ENCODE measurements at regions of chr3 and their contacts with region 1.

Region 1: GRCh38 chr3:50350527-50351322 is at the starts of genes CYB561D2 and NPRL2:
- DNase-seq: peak; percentile 97
- H3K4me3 ChIP-seq: peak within 1 kb of the TSS; percentile 76 to 94
- H3K27ac ChIP-seq: peak within 1 kb of the TSS; percentile 83 to 98
- H3K4me1 ChIP-seq: peaks cover 11 to 59% of the 10 kb centered on the region in 2 experiments; a peak in 2 of 4 replicates
- H3K27me3 ChIP-seq: no peaks in the 10 kb centered on the region
- CTCF ChIP-seq: no peak
- EP300 ChIP-seq: no peak
- RAD21 ChIP-seq: no peak
- polyA plus RNA-seq, gene CYB561D2: 40.7 and 46.5 TPM in 2 replicates
- polyA plus RNA-seq, gene NPRL2: 43.6 and 56.2 TPM in 2 replicates

Region 2: GRCh38 chr3:50370594-50370993 is 19.9 kb after region 1 on chr3:
- CTCF ChIA-PET with region 1: interaction called, 11 read pairs
- POLR2A ChIA-PET with region 1: interaction called, 8 read pairs
- DNase-seq: peak; percentile 78
- H3K4me3 ChIP-seq: no peak overlapping the region
- H3K27ac ChIP-seq: peak overlapping the region in 1 of 2 experiments; percentile 56; a peak in 2 of 4 replicates
- H3K4me1 ChIP-seq: peaks cover 0 to 78% of the 10 kb centered on the region in 2 experiments; a peak in 2 of 4 replicates
- H3K27me3 ChIP-seq: no peaks in the 10 kb centered on the region
- CTCF ChIP-seq: peak; percentile 31
- EP300 ChIP-seq: no peak
- RAD21 ChIP-seq: peak; percentile 72

Region 3: GRCh38 chr3:50388016-50388719 is 37.4 kb after region 1 on chr3:
- CTCF ChIA-PET with region 1: interaction called, 42 read pairs
- POLR2A ChIA-PET with region 1: interaction called, 11 read pairs
- DNase-seq: peak; percentile 89
- H3K4me3 ChIP-seq: no peak overlapping the region
- H3K27ac ChIP-seq: peak overlapping the region in 1 of 2 experiments; percentile 100; a peak in 2 of 4 replicates
- H3K4me1 ChIP-seq: peaks cover 0 to 99% of the 10 kb centered on the region in 2 experiments; a peak in 2 of 4 replicates
- H3K27me3 ChIP-seq: no peaks in the 10 kb centered on the region
- CTCF ChIP-seq: peak; percentile 46
- EP300 ChIP-seq: peak in 1 of 2 experiments; percentile 86; a peak in 1 of 4 replicates
- RAD21 ChIP-seq: peak; percentile 73

Region 4: GRCh38 chr3:50436114-50436674 is 85.5 kb after region 1 on chr3:
- CTCF ChIA-PET with region 1: interaction called, 19 read pairs
- POLR2A ChIA-PET with region 1: interaction called, 13 read pairs
- DNase-seq: peak; percentile 85
- H3K4me3 ChIP-seq: peak overlapping the region in 1 of 2 experiments; percentile 33; a peak in 1 of 4 replicates
- H3K27ac ChIP-seq: peak overlapping the region in 1 of 2 experiments; percentile 100; a peak in 2 of 4 replicates
- H3K4me1 ChIP-seq: peaks cover 0 to 97% of the 10 kb centered on the region in 2 experiments; a peak in 2 of 4 replicates
- H3K27me3 ChIP-seq: no peaks in the 10 kb centered on the region
- CTCF ChIP-seq: peak; percentile 84
- EP300 ChIP-seq: no peak
- RAD21 ChIP-seq: peak; percentile 85

Region 5: DNA sequence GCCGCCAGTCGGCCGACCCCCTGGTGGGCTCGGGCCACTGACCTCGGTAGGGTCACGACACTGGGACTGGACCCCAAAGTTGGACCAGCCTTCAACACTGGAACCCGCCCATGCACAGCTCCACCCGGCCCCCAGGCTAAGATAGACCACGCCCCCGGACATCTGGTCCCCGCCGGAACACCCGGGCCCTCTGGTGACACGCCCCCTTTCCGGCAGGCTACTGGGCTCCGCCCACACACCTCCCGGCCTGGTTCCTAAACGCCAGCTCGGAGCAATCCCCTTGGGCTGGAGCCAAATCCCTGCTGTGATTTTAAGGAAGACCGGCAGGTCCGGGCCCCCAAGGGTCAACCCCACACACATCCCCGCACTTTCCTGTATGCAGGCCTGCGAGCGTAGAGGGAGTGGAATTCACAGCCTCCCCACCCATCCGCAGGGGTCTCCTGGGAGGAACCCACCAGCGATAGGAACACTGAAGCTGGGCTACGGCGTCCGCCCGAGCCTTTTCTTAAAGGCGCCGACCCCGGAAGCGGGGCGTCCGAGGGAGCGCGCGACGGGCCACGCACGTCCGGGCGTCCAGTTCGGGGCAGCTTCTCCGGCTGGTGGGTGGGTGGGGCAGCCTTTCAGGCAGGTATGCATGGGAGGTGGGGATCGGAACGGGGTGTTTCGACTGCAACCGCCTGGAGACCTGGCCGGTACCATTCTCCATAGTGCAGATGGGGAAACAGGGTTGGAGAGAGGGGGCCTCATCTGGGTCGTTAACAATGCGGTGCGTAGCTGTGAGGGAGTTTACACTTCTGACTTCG is 218.4 kb after region 1 on chr3 and contains the start of gene HEMK1:
- CTCF ChIA-PET with region 1: interaction called, 10 read pairs
- POLR2A ChIA-PET with region 1: interaction called, 8 read pairs
- DNase-seq: peak; percentile 99
- H3K4me3 ChIP-seq: peak within 1 kb of the TSS; percentile 71 to 81
- H3K27ac ChIP-seq: peak within 1 kb of the TSS; percentile 86 to 96
- H3K4me1 ChIP-seq: peaks cover 0 to 22% of the 10 kb centered on the region in 2 experiments; a peak in 1 of 4 replicates
- H3K27me3 ChIP-seq: no peaks in the 10 kb centered on the region
- CTCF ChIP-seq: no peak
- EP300 ChIP-seq: peak in 1 of 2 experiments; percentile 48; a peak in 1 of 4 replicates
- RAD21 ChIP-seq: no peak
- polyA plus RNA-seq, gene HEMK1: 15.4 and 21.7 TPM in 2 replicates

Region 6: DNA sequence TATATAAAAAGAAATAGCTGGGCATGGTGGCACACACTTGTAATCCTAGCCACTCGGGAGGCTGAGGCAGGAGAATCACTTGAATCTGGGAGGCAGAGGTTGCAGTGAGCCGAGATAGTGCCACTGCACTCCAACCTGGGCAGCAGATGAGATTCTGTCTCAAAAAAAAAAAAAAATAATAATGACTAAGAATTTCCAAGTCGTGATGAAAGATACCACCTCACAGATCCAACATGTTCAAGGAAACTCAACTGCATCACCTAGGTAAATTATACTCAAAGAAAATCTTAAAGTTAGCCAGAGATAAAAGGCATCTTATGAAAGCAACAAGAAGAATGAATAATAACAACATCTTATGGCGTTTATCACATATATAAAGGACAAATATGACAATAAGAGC is 374.1 kb after region 1 on chr3:
- CTCF ChIA-PET with region 1: no interaction called
- POLR2A ChIA-PET with region 1: no interaction called
- DNase-seq: no peak
- H3K4me3 ChIP-seq: no peak overlapping the region
- H3K27ac ChIP-seq: no peak overlapping the region
- H3K4me1 ChIP-seq: no peaks in the 10 kb centered on the region
- H3K27me3 ChIP-seq: no peaks in the 10 kb centered on the region
- CTCF ChIP-seq: no peak
- EP300 ChIP-seq: no peak
- RAD21 ChIP-seq: no peak

Measured in SK-N-SH (cell line).